ENCODE measurements at regions of chr15 and their contacts with region 1.

Region 1: GRCh38 chr15:23003736-23004135 is 23.6 kb upstream of the CYFIP1 start:
- DNase-seq: no peak
- ATAC-seq: no peak
- H3K4me3 ChIP-seq: no peak overlapping the region
- H3K27ac ChIP-seq: no peak overlapping the region
- H3K4me1 ChIP-seq: no peaks in the 10 kb centered on the region
- H3K27me3 ChIP-seq: no peaks in the 10 kb centered on the region
- CTCF ChIP-seq: 0 out of 6 replicates have a peak, but pooled peaks of 2 of the 3 experiments have one; percentile 10 to 11
- POLR2A ChIP-seq: no peak
- RAD21 ChIP-seq: no peak

Region 2: GRCh38 chr15:22918056-22918455 is 85.7 kb before region 1 on chr15:
- CTCF ChIA-PET with region 1: no interaction called
- POLR2A ChIA-PET with region 1: no interaction called
- RAD21 ChIA-PET with region 1: no interaction called
- intact Hi-C with region 1: no loop called
- DNase-seq: peak; percentile 23
- ATAC-seq: peak; percentile 99
- H3K4me3 ChIP-seq: no peak overlapping the region
- H3K27ac ChIP-seq: no peak overlapping the region
- H3K4me1 ChIP-seq: peaks cover 15 to 40% of the 10 kb centered on the region in 2 experiments
- H3K27me3 ChIP-seq: no peaks in the 10 kb centered on the region
- CTCF ChIP-seq: no peak
- POLR2A ChIP-seq: no peak
- RAD21 ChIP-seq: no peak

Region 3: GRCh38 chr15:22991741-22992360 is 11.9 kb before region 1 on chr15:
- CTCF ChIA-PET with region 1: no interaction called
- POLR2A ChIA-PET with region 1: no interaction called
- RAD21 ChIA-PET with region 1: no interaction called
- intact Hi-C with region 1: loop called (anchors 2 kb)
- DNase-seq: no peak
- ATAC-seq: no peak
- H3K4me3 ChIP-seq: no peak overlapping the region
- H3K27ac ChIP-seq: no peak overlapping the region
- H3K4me1 ChIP-seq: no peaks in the 10 kb centered on the region
- H3K27me3 ChIP-seq: no peaks in the 10 kb centered on the region
- CTCF ChIP-seq: no peak
- POLR2A ChIP-seq: no peak
- RAD21 ChIP-seq: no peak

Measured in HCT116 (cell line).